Cardiac septum (tissue), 1 donor: ENCODE measurements at regions of chr5 and their contacts with region 1.

Region 1: DNA sequence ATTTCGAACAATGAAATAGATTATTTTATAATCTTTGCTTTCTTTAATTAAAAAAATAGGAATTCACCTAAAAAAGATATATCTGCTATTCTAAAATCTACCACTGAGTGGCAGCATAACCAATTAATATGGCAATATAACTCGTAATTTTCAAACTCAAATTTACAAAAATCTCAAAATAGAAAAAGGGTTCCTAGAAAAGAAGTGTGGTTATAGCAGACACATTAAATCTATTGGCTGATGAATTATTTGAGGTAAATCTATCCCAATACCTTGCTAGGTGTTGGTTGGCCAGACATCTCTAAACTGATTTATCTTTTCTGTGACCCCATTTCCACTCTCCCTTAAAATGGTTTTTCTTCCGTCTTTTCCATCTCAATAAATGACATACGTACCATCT is 30.2 kb upstream of the NRG2 start:
- DNase-seq: no peak

Region 2: DNA sequence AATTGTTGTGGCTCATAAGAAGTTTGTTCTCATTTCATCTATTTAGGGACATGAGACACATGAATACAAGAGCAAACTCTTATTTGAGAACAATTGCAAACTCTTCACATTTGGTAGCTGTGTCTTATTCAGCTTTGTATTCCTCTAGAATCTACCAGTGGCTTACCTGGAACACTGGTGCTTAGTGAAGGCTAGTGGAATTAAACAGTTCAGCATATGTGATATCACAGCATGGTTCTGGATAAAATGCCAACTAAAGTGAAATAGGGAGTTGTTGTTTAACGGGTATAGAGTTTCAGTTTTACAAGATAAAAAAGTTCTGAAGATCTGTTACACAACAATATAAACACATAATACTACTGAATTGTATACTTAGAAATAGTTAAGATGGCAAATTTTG is 79.1 kb before region 1 on chr5:
- intact Hi-C with region 1: no loop called
- DNase-seq: no peak

Region 3: GRCh38 chr5:140145818-140146522 is 72.7 kb after region 1 on chr5:
- intact Hi-C with region 1: loop called (anchors 2 kb)
- DNase-seq: peak; percentile 84

Region 4: DNA sequence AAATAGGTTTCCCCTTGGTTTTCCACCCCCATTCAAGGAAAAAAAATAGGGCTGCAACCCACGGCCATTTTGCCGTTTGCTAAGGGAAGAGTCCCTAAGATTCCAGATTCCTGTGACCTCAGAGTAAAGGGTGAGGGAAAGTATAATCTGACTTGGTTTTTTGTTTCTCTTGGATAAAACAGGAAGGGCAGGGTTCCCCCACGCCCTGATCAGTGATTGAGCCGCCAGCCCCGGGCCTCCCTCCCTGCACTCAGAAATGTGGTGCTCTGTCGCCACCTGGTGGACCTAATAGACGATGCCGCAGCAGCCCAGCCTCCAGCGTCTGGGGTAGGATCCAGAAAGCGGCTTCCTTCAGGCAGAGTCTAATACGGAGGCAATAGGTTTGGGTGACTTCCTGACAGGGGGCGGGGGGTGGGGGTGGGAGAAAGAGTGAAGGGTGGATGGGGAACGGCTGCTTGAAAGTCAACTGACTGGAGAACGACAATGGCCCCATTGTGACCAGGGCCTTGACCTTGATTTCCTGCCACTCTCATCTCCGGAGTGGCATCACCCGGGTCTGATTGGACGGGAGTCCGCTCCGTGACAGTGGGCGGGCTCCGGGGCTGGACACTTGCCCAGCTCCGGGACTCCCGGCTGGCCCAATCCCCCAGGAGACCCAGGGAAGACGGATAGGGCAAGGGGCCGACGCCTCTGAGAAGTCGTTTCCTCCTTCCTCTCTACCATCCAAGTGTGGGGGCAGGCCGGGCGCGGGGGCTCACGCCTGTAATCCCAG is 83.9 kb after region 1 on chr5:
- intact Hi-C with region 1: loop called (anchors 1 kb)
- DNase-seq: peak; percentile 96

Region 5: GRCh38 chr5:140357726-140358093 is 284.4 kb after region 1 on chr5:
- intact Hi-C with region 1: loop called (anchors 10 kb)
- DNase-seq: peak; percentile 91